Motor neuron (in vitro differentiated cells): ENCODE measurements at regions of chr14 and their contacts with region 1.

Region 1: GRCh38 chr14:78566026-78566858 is 396.1 kb downstream of the NRXN3 start:
- ATAC-seq: peak; percentile 98 to 100 (median 100)
- H3K4me3 ChIP-seq: peak overlapping the region in 3 of 5 donors; percentile 8 to 16 (median 15)
- H3K27ac ChIP-seq: no peak overlapping the region
- H3K4me1 ChIP-seq: peaks cover 5 to 9% of the 10 kb centered on the region in 2 donors

Region 2: GRCh38 chr14:78448164-78449094 is 117.8 kb before region 1 on chr14:
- in situ Hi-C with region 1: loop called in 1 of 9 experiments (anchors 10 kb)
- ATAC-seq: peak in 4 of 8 experiments; percentile 28 to 89 (median 80)
- H3K4me3 ChIP-seq: no peak overlapping the region
- H3K27ac ChIP-seq: no peak overlapping the region
- H3K4me1 ChIP-seq: peaks cover 4 to 9% of the 10 kb centered on the region in 2 donors

Region 3: GRCh38 chr14:78805570-78805969 is 239.3 kb after region 1 on chr14:
- in situ Hi-C with region 1: no loop called
- ATAC-seq: peak in 4 of 8 experiments; percentile 36 to 86 (median 68)
- H3K4me3 ChIP-seq: no peak overlapping the region
- H3K27ac ChIP-seq: no peak overlapping the region
- H3K4me1 ChIP-seq: no peaks in the 10 kb centered on the region